Sigmoid colon (tissue), 7 donors: ENCODE measurements at regions of chr1 and their contacts with region 1.

Region 1: DNA sequence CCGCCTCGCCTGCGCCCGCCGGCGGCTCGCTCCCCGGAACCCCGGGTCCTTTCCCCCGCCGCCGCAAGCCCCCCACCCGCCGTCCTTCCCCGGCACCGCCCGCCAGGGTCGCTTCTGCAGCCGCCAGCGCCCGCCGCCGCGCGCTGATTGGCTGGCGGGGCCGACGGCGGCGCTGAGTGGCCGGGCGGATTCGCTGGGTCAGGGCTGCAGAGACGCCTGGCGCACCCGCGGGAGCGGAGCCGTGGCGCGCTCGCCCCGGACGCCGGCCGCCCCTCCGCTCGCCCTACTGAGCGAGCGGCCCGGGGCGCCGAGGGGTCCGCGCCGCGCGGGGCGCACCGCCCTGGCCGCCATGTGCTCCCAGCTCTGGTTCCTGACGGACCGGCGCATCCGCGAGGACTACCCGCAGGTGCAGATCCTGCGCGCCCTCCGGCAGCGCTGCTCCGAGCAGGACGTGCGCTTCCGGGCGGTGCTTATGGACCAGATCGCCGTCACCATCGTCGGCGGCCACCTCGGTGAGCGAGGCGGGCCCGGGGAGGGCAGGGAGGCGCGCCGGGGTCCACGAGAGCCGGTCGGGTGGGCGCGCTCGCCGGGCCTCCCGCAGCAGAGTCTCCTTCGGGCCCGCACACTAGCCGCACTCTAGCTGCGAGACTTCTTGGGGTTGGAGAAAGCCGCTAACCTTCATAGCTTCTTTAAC is at the start of gene RIMKLA:
- DNase-seq: peak; percentile 77
- H3K4me3 ChIP-seq: peak within 1 kb of the TSS; percentile 51 to 71 (median 68)
- H3K27ac ChIP-seq: peak within 1 kb of the TSS; percentile 71 to 85 (median 72)
- H3K4me1 ChIP-seq: peaks cover 0 to 16% (median 12%) of the 10 kb centered on the region in 4 donors
- H3K27me3 ChIP-seq: no peaks in the 10 kb centered on the region
- CTCF ChIP-seq: no peak
- EP300 ChIP-seq: no peak
- POLR2A ChIP-seq: no peak
- total RNA-seq, gene RIMKLA: 2.1 to 11.4 (median 3.6) TPM

Region 2: DNA sequence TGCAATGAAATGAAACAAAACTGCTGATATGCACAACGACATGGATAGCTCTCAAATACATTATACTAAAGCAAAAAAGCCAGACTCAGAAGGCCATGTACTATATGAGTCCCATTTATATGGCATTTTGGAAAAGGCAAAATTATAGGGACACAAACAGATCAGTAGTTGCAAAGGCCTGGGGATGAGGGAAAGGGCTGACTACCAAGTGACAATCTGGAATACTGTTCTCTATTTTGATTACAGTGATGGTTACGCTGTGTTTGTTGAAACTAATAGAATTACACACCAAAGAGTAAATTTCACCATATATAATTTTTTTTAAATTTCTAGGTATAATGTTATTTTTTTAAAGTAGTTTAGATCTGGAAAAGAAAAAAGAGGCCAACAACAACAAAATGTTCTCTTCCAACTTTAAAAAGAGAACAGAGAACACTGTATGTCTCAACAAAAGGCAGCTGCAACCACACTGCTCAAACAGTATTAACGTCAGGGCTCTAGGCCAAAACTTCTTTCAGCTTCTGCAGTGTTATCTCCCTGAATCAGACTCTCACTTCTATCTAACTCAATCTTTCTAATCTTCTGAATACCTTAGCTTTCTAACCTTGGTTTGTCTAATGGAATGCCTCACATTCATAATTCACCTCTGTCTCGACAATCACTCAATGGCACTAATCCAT is 121.5 kb before region 1 on chr1:
- intact Hi-C with region 1: no loop called
- DNase-seq: no peak
- H3K4me3 ChIP-seq: no peak overlapping the region
- H3K27ac ChIP-seq: peak overlapping the region; percentile 11 to 35 (median 29)
- H3K4me1 ChIP-seq: peaks cover 0 to 28% (median 16%) of the 10 kb centered on the region in 4 donors
- H3K27me3 ChIP-seq: no peaks in the 10 kb centered on the region
- CTCF ChIP-seq: no peak
- EP300 ChIP-seq: no peak
- POLR2A ChIP-seq: no peak

Region 3: GRCh38 chr1:42348498-42348897 is 32.2 kb before region 1 on chr1:
- intact Hi-C with region 1: no loop called
- DNase-seq: no peak
- H3K4me3 ChIP-seq: no peak overlapping the region
- H3K27ac ChIP-seq: no peak overlapping the region
- H3K4me1 ChIP-seq: no peaks in the 10 kb centered on the region
- H3K27me3 ChIP-seq: no peaks in the 10 kb centered on the region
- CTCF ChIP-seq: no peak
- EP300 ChIP-seq: no peak
- POLR2A ChIP-seq: no peak

Region 4: GRCh38 chr1:42403880-42404400 is 23.2 kb after region 1 on chr1:
- intact Hi-C with region 1: no loop called
- DNase-seq: no peak
- H3K4me3 ChIP-seq: no peak overlapping the region
- H3K27ac ChIP-seq: no peak overlapping the region
- H3K4me1 ChIP-seq: no peaks in the 10 kb centered on the region
- H3K27me3 ChIP-seq: no peaks in the 10 kb centered on the region
- CTCF ChIP-seq: no peak
- EP300 ChIP-seq: no peak
- POLR2A ChIP-seq: no peak

Region 5: GRCh38 chr1:42420911-42421585 is 40.3 kb after region 1 on chr1:
- intact Hi-C with region 1: loop called (anchors 5 kb)
- DNase-seq: peak; percentile 90
- H3K4me3 ChIP-seq: no peak overlapping the region
- H3K27ac ChIP-seq: peak overlapping the region in 3 of 4 donors; percentile 74 to 87 (median 80)
- H3K4me1 ChIP-seq: peaks cover 0 to 38% (median 34%) of the 10 kb centered on the region in 4 donors
- H3K27me3 ChIP-seq: no peaks in the 10 kb centered on the region
- CTCF ChIP-seq: no peak
- EP300 ChIP-seq: peak in 3 of 4 donors; percentile 29 to 93 (median 80)
- POLR2A ChIP-seq: no peak

Region 6: DNA sequence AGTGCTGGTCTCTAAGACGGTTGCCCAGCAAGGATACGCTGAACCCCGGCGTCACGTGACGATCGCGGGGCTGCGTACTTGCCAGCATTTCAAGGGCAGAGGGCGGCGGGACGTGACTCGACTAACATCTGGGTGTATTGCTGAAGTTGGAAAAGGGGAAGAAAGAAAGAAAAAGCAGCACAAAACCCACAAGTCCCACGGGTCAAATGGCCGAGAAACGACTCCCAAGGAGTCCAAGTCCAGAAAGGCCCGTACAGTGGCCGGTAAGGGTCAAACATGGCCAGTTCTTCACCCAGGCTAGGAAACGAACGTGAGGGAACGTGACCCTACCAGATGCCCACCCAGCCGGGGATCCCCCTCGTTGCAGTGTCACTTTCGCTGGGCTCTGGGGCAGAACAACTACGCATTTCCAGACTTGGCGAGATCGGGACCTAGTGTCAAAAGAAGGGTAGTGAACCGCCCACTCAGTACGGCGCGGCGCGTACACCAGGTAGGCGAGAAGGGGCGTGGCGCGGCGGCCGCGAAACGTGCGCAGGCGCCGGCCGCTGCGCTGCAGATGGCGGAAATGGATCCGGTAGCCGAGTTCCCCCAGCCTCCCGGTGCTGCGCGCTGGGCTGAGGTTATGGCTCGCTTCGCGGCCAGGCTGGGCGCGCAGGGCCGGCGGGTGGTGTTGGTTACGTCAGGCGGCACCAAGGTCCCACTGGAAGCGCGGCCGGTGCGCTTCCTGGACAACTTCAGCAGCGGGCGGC is 75.5 kb after region 1 on chr1 and contains the starts of genes PPCS and ZMYND12:
- intact Hi-C with region 1: loop called (anchors 2 kb)
- DNase-seq: peak; percentile 92
- H3K4me3 ChIP-seq: peak within 1 kb of the TSS; percentile 80 to 99 (median 92)
- H3K27ac ChIP-seq: peak within 1 kb of the TSS; percentile 88 to 93 (median 90)
- H3K4me1 ChIP-seq: peaks cover 0 to 24% (median 19%) of the 10 kb centered on the region in 4 donors
- H3K27me3 ChIP-seq: no peaks in the 10 kb centered on the region
- CTCF ChIP-seq: peak in 2 of 4 experiments; percentile 23 to 45
- EP300 ChIP-seq: no peak
- POLR2A ChIP-seq: peak; percentile 36 to 66
- total RNA-seq, gene PPCS: 32.1 to 99.9 (median 52.5) TPM
- total RNA-seq, gene ZMYND12: 0.54 to 1.1 (median 0.77) TPM

Region 7: GRCh38 chr1:43509723-43510375 is 1129.1 kb after region 1 on chr1:
- intact Hi-C with region 1: no loop called
- DNase-seq: no peak
- H3K4me3 ChIP-seq: no peak overlapping the region
- H3K27ac ChIP-seq: no peak overlapping the region
- H3K4me1 ChIP-seq: no peaks in the 10 kb centered on the region
- H3K27me3 ChIP-seq: no peaks in the 10 kb centered on the region
- CTCF ChIP-seq: no peak
- EP300 ChIP-seq: no peak
- POLR2A ChIP-seq: no peak